ENCODE measurements at regions of chr1 and their contacts with region 1.

Region 1: GRCh38 chr1:29124366-29125236 is 898 bp upstream of the TMEM200B start:
- DNase-seq: peak; percentile 93 to 96 (median 95)
- H3K4me3 ChIP-seq: peak overlapping the region; percentile 66
- H3K27ac ChIP-seq: peak overlapping the region; percentile 91 to 95
- H3K4me1 ChIP-seq: peaks cover 14% of the 10 kb centered on the region
- H3K27me3 ChIP-seq: no peaks in the 10 kb centered on the region
- CTCF ChIP-seq: peak; percentile 90 to 100 (median 100)
- EP300 ChIP-seq: peak; percentile 29
- POLR2A ChIP-seq: peak; percentile 89

Region 2: DNA sequence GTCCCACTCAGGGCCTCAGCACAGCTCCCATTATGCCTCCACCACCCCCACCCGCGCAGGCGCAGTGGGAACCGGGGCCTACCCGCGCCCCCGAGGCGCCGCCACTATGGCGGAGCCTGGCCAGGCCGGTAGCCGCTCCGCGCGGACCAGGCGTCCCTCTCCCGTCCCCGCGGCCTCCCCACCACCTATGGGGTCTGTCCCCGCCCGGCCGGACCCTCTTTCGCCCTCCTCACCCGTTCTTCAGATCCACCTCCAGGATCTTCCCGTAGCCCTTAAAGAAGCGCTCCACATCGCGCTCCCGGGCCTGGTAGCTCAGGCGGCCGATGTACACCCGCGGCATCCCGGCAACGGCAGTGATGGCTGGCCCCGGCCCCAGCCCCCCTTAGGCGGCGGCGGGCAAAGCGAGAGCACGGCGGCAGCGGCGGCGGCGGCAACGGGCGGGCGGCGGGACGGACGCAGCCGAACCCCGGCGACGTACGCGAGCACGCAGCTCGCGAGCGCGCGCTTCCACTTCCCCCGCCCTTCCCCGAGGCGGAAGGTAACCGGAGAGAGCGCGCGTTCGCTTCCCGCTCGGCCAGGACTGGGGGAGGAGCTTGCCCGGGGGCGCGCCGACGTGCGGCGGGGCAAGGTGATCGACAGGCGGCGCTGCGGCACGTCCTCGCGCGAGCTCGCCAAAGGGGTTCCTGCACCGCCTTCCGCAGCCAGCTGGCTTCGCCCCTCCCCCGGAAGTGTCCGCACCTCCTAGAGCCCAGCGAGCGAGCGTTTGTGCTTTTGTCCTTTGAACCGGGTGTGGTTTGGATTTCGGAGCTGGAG is 57.0 kb after region 1 on chr1 and contains the start of gene SRSF4:
- intact Hi-C with region 1: loop called in 3 of 4 experiments (anchors 2 to 5 kb)
- DNase-seq: peak; percentile 99 to 100 (median 99)
- H3K4me3 ChIP-seq: peak within 1 kb of the TSS; percentile 95
- H3K27ac ChIP-seq: peak within 1 kb of the TSS; percentile 98 to 100
- H3K4me1 ChIP-seq: peaks cover 2% of the 10 kb centered on the region
- H3K27me3 ChIP-seq: no peaks in the 10 kb centered on the region
- CTCF ChIP-seq: peak; percentile 54 to 92 (median 83)
- EP300 ChIP-seq: peak; percentile 47
- POLR2A ChIP-seq: peak; percentile 99
- total RNA-seq, gene SRSF4: 55.2 to 111 (median 88.2) TPM